Mammary epithelial cell (primary cell): ENCODE measurements at regions of chr12 and their contacts with region 1.

Region 1: GRCh38 chr12:3667485-3667884 is 85.4 kb downstream of the CRACR2A start:
- DNase-seq: no peak
- H3K4me3 ChIP-seq: no peak overlapping the region
- H3K27ac ChIP-seq: no peak overlapping the region
- H3K4me1 ChIP-seq: peaks cover 19% of the 10 kb centered on the region
- H3K27me3 ChIP-seq: peaks cover 13% of the 10 kb centered on the region
- CTCF ChIP-seq: peak; percentile 1 to 21

Region 2: DNA sequence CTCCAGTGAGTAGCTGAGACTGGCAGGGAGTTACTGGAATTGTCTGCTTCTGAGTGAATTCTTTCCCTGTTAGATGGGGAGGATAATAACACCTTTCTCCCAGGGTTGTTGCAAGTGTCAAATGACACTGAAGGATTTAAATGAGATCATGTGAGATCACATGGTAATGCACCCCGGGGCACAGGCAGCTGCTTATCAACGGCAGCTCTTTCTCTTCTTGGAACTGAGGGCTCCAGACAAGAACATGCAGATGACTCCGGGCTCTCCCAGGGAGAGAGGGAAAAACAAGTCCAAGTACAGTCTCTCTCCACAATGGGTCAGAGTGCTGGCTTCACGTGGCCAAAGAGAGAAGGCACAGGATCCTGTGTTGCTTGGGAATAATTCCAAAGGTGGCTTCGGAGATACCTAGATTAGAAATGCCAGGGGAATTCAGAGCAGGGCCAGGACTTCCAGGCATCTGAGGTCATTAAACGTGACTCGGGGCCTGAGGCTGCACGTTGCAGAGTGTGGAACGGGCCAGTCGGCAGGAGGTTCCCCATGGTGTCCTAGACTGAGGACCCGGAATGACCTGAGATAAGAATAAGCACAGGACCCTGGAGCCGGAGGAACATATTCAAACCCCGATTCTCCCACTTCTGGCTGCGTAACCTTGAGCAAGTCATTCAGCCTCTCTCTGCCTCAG is 67.3 kb before region 1 on chr12:
- CTCF ChIA-PET with region 1: no interaction called
- dilution Hi-C with region 1: no loop called
- in situ Hi-C with region 1: no loop called
- intact Hi-C with region 1: no loop called
- DNase-seq: peak; percentile 4
- H3K4me3 ChIP-seq: no peak overlapping the region
- H3K27ac ChIP-seq: no peak overlapping the region
- H3K4me1 ChIP-seq: peaks cover 7% of the 10 kb centered on the region
- H3K27me3 ChIP-seq: no peaks in the 10 kb centered on the region
- CTCF ChIP-seq: no peak

Region 3: GRCh38 chr12:3735432-3735831 is 67.9 kb after region 1 on chr12:
- CTCF ChIA-PET with region 1: no interaction called
- dilution Hi-C with region 1: loop called (anchors 5 kb)
- in situ Hi-C with region 1: no loop called
- intact Hi-C with region 1: no loop called
- DNase-seq: no peak
- H3K4me3 ChIP-seq: no peak overlapping the region
- H3K27ac ChIP-seq: no peak overlapping the region
- H3K4me1 ChIP-seq: no peaks in the 10 kb centered on the region
- H3K27me3 ChIP-seq: peaks cover 7% of the 10 kb centered on the region
- CTCF ChIP-seq: no peak

Region 4: DNA sequence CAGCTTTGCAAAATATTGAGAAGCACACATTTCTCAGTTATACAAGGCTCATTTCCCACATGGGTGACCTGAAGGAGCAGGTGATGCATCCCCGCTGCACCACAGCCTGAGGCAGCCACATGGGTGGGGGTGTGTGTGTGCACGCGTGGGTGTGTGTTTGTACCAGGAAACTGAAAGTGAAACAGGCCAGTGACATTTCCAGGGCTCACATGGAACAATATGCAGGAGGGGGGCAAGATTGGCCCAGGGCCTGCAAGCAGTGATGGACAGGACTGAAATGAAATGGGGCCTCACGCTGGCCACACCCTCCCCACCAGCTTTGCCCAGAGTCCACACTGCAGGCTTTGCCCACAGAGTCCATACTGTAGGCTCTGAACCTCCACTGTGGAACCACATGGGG is 359.9 kb after region 1 on chr12:
- CTCF ChIA-PET with region 1: no interaction called
- dilution Hi-C with region 1: no loop called
- in situ Hi-C with region 1: no loop called
- intact Hi-C with region 1: no loop called
- DNase-seq: no peak
- H3K4me3 ChIP-seq: no peak overlapping the region
- H3K27ac ChIP-seq: no peak overlapping the region
- H3K4me1 ChIP-seq: peaks cover 26% of the 10 kb centered on the region
- H3K27me3 ChIP-seq: no peaks in the 10 kb centered on the region
- CTCF ChIP-seq: no peak